ENCODE measurements at regions of chr2 and their contacts with region 1.

Region 1: GRCh38 chr2:98412751-98413458 is 31.8 kb upstream of the INPP4A start:
- DNase-seq: peak; percentile 68 to 80 (median 69)
- ATAC-seq: peak; percentile 97
- H3K4me3 ChIP-seq: no peak overlapping the region
- H3K27ac ChIP-seq: no peak overlapping the region
- H3K4me1 ChIP-seq: no peaks in the 10 kb centered on the region; a peak in 1 of 5 replicates
- H3K27me3 ChIP-seq: peaks cover 0 to 5% of the 10 kb centered on the region in 2 experiments; a peak in 3 of 5 replicates
- CTCF ChIP-seq: peak; percentile 63 to 90 (median 74)
- EP300 ChIP-seq: no peak
- POLR2A ChIP-seq: no peak
- RAD21 ChIP-seq: peak; percentile 85 to 92

Region 2: DNA sequence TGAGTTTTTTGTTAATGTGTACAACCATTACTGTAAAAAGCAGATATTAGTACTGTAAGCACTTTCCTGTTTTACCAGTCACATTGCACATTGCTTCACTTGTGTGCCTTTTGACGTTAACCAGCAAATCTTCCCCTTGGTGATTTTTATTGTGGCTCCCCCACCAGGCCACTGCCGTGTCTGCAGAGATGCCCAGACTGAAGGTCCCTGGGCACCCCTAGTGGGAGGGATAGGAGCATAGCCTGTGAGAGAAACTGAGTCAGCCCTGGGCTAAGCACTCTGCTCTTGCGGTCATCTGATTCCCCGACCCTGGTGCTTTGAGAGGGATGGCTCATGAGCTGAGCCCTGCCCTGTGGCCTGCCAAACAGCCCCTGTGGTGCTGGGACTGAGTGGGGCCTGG is 105.2 kb after region 1 on chr2:
- CTCF ChIA-PET with region 1: interaction called, 4 read pairs
- POLR2A ChIA-PET with region 1: no interaction called
- in situ Hi-C with region 1: no loop called
- intact Hi-C with region 1: loop called (anchors 1 kb)
- DNase-seq: peak; percentile 44 to 64 (median 54)
- ATAC-seq: peak; percentile 80
- H3K4me3 ChIP-seq: no peak overlapping the region
- H3K27ac ChIP-seq: no peak overlapping the region
- H3K4me1 ChIP-seq: peaks cover 11 to 20% of the 10 kb centered on the region in 2 experiments; a peak in 4 of 5 replicates
- H3K27me3 ChIP-seq: no peaks in the 10 kb centered on the region
- CTCF ChIP-seq: peak; percentile 70 to 98 (median 97)
- EP300 ChIP-seq: no peak
- POLR2A ChIP-seq: no peak
- RAD21 ChIP-seq: peak in 1 of 2 experiments; percentile 75; a peak in 2 of 4 replicates

Region 3: DNA sequence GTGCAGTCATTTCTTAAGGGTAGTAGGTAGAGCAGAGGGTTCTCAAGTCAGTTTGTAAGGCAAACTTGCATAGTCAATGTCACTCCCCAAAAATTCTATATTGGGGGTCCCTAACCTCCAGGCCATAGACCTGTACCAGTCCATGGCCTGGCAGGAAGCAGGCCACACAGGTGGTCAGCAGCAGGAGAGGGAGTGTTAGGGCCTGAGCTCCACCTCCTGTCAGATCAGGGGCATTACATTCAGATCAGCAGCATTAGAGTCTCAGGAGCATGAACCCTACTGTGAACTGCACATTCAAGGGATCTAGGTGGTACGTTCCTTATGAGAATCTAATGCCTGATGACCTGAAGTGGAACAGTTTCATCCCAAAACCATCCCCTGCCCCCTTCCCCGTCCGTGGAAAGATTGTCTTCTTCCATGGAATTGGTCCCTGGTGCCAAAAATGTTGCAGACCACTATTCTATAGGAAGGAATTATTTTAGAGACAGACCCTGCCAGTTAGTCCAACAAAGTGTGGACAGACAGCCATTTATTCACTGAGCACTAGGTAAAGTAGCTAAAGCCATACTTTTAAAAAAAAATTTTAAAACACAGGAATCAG is 188.7 kb after region 1 on chr2:
- CTCF ChIA-PET with region 1: interaction called, 12 read pairs
- POLR2A ChIA-PET with region 1: no interaction called
- in situ Hi-C with region 1: loop called (anchors 5 kb)
- intact Hi-C with region 1: loop called (anchors 1 kb)
- DNase-seq: peak in 3 of 4 experiments; percentile 31 to 52 (median 49)
- ATAC-seq: peak; percentile 96
- H3K4me3 ChIP-seq: no peak overlapping the region
- H3K27ac ChIP-seq: no peak overlapping the region
- H3K4me1 ChIP-seq: no peaks in the 10 kb centered on the region; a peak in 1 of 5 replicates
- H3K27me3 ChIP-seq: no peaks in the 10 kb centered on the region
- CTCF ChIP-seq: peak; percentile 71 to 75 (median 72)
- EP300 ChIP-seq: no peak
- POLR2A ChIP-seq: 0 out of 2 replicates have a peak, but pooled peaks have one; percentile 33
- RAD21 ChIP-seq: peak; percentile 59 to 78; a peak in 3 of 4 replicates

Region 4: GRCh38 chr2:98835831-98836385 is 423.0 kb after region 1 on chr2:
- CTCF ChIA-PET with region 1: interaction called, 5 read pairs
- POLR2A ChIA-PET with region 1: no interaction called
- in situ Hi-C with region 1: loop called (anchors 25 kb)
- intact Hi-C with region 1: loop called (anchors 10 kb)
- DNase-seq: no peak
- ATAC-seq: no peak
- H3K4me3 ChIP-seq: no peak overlapping the region
- H3K27ac ChIP-seq: no peak overlapping the region
- H3K4me1 ChIP-seq: no peaks in the 10 kb centered on the region
- H3K27me3 ChIP-seq: peaks cover 0 to 10% of the 10 kb centered on the region in 2 experiments; a peak in 2 of 5 replicates
- CTCF ChIP-seq: no peak
- EP300 ChIP-seq: no peak
- POLR2A ChIP-seq: no peak
- RAD21 ChIP-seq: no peak

Measured in K562 (cell line).